ENCODE measurements at regions of chr15 and their contacts with region 1.

Region 1: GRCh38 chr15:74311734-74312408 is 55.6 kb downstream of the CYP11A1 start:
- DNase-seq: no peak
- H3K4me3 ChIP-seq: no peak overlapping the region
- H3K27ac ChIP-seq: no peak overlapping the region
- H3K4me1 ChIP-seq: no peaks in the 10 kb centered on the region
- H3K27me3 ChIP-seq: no peaks in the 10 kb centered on the region
- CTCF ChIP-seq: no peak

Region 2: GRCh38 chr15:73964736-73965093 is 347.2 kb before region 1 on chr15:
- intact Hi-C with region 1: loop called (anchors 10 kb)
- DNase-seq: peak; percentile 84
- H3K4me3 ChIP-seq: no peak overlapping the region
- H3K27ac ChIP-seq: no peak overlapping the region
- H3K4me1 ChIP-seq: no peaks in the 10 kb centered on the region
- H3K27me3 ChIP-seq: no peaks in the 10 kb centered on the region
- CTCF ChIP-seq: peak; percentile 88

Region 3: GRCh38 chr15:74635228-74635627 is 323.4 kb after region 1 on chr15:
- intact Hi-C with region 1: no loop called
- DNase-seq: peak; percentile 74
- H3K4me3 ChIP-seq: no peak overlapping the region
- H3K27ac ChIP-seq: no peak overlapping the region
- H3K4me1 ChIP-seq: no peaks in the 10 kb centered on the region
- H3K27me3 ChIP-seq: no peaks in the 10 kb centered on the region
- CTCF ChIP-seq: peak; percentile 88